Activated naive CD4-positive, alpha-beta T cell treated with anti-CD3 and anti-CD28 coated beads for 36 hours (primary cell): ENCODE measurements at regions of chr4 and their contacts with region 1.

Region 1: GRCh38 chr4:9146967-9147366 is 23.2 kb upstream of the FAM90A26 start:
- DNase-seq: no peak
- H3K4me3 Mint-ChIP-seq: no peak overlapping the region
- H3K27ac Mint-ChIP-seq: no peak overlapping the region
- H3K4me1 Mint-ChIP-seq: peaks cover 2% of the 10 kb centered on the region
- H3K27me3 Mint-ChIP-seq: no peaks in the 10 kb centered on the region

Region 2: DNA sequence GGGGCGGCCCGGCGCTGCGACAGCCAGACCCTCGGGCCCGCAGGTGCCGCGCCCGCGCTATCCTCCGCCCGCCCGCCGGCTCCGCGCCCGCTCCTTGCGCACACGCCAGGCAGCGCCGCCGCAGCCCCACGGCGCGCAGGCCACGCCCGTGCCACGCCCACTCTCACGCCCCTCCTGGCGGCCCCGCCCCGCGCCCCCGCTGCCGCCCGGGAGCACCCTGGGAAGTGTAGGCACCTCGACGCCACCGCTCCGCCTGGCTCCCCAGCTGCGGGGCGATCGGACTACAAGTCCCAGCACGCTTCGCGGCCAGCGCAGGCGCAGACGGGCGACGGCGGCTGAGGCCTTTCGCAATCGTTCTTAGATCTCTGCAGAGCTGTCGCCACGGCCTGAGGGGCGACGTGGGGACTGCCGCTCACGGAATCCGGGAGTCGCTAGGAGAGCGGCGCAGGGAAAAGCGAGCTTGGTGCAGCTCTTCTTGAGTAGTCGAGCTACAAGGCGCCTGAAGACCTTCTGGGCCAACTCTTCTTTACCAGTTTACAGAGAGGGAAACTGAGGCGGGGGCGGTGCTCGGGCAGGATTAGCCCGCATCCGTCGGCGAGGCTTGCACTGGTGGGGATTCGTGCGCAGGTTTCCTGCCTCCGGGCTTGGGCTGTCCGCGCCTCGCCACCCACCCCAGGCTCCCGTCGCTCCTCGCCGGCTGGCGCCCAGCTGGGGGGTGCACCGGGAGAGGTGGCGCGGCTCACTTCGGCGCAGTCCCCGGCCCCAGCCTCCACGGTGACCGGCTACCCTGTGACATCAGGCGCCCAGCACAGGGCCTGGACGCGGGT is 988.0 kb before region 1 on chr4 and contains the start of gene ABLIM2:
- CTCF ChIA-PET with region 1: no interaction called
- intact Hi-C with region 1: loop called (anchors 2 kb)
- DNase-seq: peak; percentile 97
- H3K4me3 Mint-ChIP-seq: peak within 1 kb of the TSS; percentile 89
- H3K27ac Mint-ChIP-seq: no peak within 1 kb of the TSS
- H3K4me1 Mint-ChIP-seq: peaks cover 11% of the 10 kb centered on the region
- H3K27me3 Mint-ChIP-seq: peaks cover 4% of the 10 kb centered on the region
- total RNA-seq, gene ABLIM2: 0.22 to 0.24 TPM

Region 3: GRCh38 chr4:8440492-8441341 is 706.2 kb before region 1 on chr4 and contains the starts of genes ACOX3 and TRMT44:
- CTCF ChIA-PET with region 1: no interaction called
- intact Hi-C with region 1: loop called (anchors 2 kb)
- DNase-seq: peak; percentile 93
- H3K4me3 Mint-ChIP-seq: peak within 1 kb of the TSS; percentile 98
- H3K27ac Mint-ChIP-seq: peak within 1 kb of the TSS; percentile 98
- H3K4me1 Mint-ChIP-seq: peaks cover 69% of the 10 kb centered on the region
- H3K27me3 Mint-ChIP-seq: no peaks in the 10 kb centered on the region
- total RNA-seq, gene ACOX3: 11.9 to 13.3 TPM
- total RNA-seq, gene TRMT44: 13.1 to 14.5 TPM

Region 4: DNA sequence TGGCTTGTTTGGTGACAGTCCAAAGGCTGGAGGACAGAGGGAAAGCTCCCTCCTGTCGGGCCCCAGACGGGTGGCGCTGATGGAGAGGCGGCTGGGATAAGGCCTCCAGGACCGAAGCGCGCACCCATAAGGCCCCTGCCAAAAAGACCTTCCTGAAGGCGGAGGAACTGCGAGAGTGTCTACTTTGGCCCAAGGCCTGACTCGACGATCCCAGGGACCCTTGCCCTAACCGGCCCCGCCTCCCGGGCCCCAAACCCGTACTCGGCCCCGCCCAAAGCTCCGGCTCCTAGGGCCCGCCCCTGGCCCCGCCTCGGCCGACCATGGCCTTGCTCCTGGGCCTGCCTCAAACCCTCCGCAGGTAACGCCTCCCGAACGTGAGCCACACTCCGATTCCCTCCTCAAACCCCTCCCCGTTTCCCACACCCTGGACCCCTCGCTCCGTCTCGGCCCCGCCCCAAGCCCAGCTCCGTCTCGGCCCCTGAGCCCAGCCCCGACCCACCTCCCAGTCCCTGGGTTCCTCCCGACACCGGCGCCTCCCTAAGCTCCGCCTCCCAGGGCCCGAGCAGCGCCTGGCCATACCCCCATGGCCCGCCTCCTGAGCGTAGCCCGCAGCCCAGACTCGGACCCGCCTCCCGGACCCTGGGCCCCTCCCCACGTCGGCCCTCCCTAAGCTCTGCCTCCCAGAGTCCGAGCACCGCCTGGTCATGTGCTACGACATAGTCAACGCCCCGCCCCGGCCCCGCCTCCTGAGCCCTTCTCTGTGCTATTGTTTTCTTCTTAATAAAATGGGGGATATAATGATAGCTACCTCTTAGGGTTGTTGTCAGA is 544.5 kb after region 1 on chr4:
- CTCF ChIA-PET with region 1: no interaction called
- intact Hi-C with region 1: loop called (anchors 5 kb)
- DNase-seq: peak; percentile 93
- H3K4me3 Mint-ChIP-seq: peak overlapping the region; percentile 82
- H3K27ac Mint-ChIP-seq: peak overlapping the region; percentile 77
- H3K4me1 Mint-ChIP-seq: peaks cover 24% of the 10 kb centered on the region
- H3K27me3 Mint-ChIP-seq: no peaks in the 10 kb centered on the region

Region 5: DNA sequence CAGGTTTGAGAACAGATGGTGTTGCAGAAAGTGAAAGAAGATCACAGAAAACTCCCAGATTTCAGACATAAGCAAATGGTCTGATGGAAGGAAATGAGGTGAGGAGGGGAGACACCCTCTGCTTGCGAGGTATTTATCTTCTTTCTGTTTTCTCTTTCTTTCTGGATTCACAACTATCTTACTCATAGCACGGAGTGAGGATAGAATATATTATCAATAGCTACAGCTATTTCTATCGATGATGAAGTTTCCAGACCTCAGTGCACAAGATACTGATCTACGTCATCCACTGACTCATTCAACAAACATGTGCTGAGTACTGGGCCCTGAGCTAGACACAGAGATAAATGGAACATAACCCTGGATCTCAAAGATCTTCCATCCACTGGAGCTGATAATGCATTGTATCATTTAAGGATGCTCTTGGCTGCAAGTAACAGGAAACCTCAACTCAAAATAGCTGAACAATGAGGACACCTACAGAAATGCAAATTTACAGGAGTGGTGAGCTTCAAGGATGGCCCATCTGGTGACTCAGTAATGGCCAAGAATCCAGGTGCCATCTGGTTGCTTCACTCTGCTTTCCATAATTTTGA is 853.1 kb after region 1 on chr4:
- CTCF ChIA-PET with region 1: no interaction called
- intact Hi-C with region 1: loop called (anchors 10 kb)
- DNase-seq: no peak
- H3K4me3 Mint-ChIP-seq: no peak overlapping the region
- H3K27ac Mint-ChIP-seq: peak overlapping the region; percentile 23
- H3K4me1 Mint-ChIP-seq: peaks cover 11% of the 10 kb centered on the region
- H3K27me3 Mint-ChIP-seq: no peaks in the 10 kb centered on the region

Region 6: GRCh38 chr4:10856271-10856782 is 1709.4 kb after region 1 on chr4:
- CTCF ChIA-PET with region 1: no interaction called
- intact Hi-C with region 1: no loop called
- DNase-seq: no peak
- H3K4me3 Mint-ChIP-seq: no peak overlapping the region
- H3K27ac Mint-ChIP-seq: no peak overlapping the region
- H3K4me1 Mint-ChIP-seq: no peaks in the 10 kb centered on the region
- H3K27me3 Mint-ChIP-seq: peaks cover 12% of the 10 kb centered on the region